Uterus (tissue), 4 donors: ENCODE measurements at regions of chr10 and their contacts with region 1.

Region 1: DNA sequence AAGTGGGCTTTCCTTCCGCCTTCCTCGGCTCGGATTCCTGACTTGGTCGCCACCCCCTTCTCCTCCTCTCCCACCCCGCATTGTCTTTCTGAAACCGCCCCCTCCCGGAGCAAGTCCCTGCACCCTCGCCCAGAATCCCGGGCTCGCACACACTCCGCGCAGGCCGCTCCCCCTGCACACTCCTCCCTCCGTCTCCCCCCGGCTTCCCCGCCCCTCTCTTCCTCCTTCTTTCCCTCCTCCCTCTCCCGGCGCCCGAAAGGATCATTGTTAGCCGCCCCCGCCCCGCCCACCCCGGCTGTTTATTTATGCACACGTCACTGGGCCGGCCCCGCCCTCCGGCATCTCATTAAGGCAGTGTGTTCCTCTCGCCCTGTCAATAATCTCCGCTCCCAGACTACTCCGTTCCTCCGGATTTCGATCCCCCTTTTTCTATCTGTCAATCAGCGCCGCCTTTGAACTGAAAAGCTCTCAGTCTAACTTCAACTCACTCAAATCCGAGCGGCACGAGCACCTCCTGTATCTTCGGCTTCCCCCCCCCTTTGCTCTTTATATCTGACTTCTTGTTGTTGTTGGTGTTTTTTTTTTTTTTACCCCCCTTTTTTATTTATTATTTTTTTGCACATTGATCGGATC is at the start of gene TCF7L2:
- DNase-seq: peak; percentile 94 to 98
- H3K4me3 ChIP-seq: peak within 1 kb of the TSS; percentile 80 to 90
- H3K27ac ChIP-seq: peak within 1 kb of the TSS; percentile 93 to 97
- H3K4me1 ChIP-seq: no peaks in the 10 kb centered on the region
- H3K27me3 ChIP-seq: no peaks in the 10 kb centered on the region
- CTCF ChIP-seq: no peak
- POLR2A ChIP-seq: peak; percentile 62 to 82
- total RNA-seq, gene TCF7L2: 12.7 to 59.9 (median 16.1) TPM

Region 2: GRCh38 chr10:112938808-112939482 is 11.0 kb before region 1 on chr10:
- intact Hi-C with region 1: no loop called
- DNase-seq: no peak
- H3K4me3 ChIP-seq: no peak overlapping the region
- H3K27ac ChIP-seq: no peak overlapping the region
- H3K4me1 ChIP-seq: no peaks in the 10 kb centered on the region
- H3K27me3 ChIP-seq: no peaks in the 10 kb centered on the region
- CTCF ChIP-seq: no peak
- POLR2A ChIP-seq: no peak

Region 3: GRCh38 chr10:113052076-113052830 is 102.3 kb after region 1 on chr10:
- intact Hi-C with region 1: loop called (anchors 10 kb)
- DNase-seq: no peak
- H3K4me3 ChIP-seq: no peak overlapping the region
- H3K27ac ChIP-seq: no peak overlapping the region
- H3K4me1 ChIP-seq: peaks cover 6% of the 10 kb centered on the region in 2 donors
- H3K27me3 ChIP-seq: no peaks in the 10 kb centered on the region
- CTCF ChIP-seq: peak in 2 of 4 experiments; percentile 4 to 12
- POLR2A ChIP-seq: no peak

Region 4: DNA sequence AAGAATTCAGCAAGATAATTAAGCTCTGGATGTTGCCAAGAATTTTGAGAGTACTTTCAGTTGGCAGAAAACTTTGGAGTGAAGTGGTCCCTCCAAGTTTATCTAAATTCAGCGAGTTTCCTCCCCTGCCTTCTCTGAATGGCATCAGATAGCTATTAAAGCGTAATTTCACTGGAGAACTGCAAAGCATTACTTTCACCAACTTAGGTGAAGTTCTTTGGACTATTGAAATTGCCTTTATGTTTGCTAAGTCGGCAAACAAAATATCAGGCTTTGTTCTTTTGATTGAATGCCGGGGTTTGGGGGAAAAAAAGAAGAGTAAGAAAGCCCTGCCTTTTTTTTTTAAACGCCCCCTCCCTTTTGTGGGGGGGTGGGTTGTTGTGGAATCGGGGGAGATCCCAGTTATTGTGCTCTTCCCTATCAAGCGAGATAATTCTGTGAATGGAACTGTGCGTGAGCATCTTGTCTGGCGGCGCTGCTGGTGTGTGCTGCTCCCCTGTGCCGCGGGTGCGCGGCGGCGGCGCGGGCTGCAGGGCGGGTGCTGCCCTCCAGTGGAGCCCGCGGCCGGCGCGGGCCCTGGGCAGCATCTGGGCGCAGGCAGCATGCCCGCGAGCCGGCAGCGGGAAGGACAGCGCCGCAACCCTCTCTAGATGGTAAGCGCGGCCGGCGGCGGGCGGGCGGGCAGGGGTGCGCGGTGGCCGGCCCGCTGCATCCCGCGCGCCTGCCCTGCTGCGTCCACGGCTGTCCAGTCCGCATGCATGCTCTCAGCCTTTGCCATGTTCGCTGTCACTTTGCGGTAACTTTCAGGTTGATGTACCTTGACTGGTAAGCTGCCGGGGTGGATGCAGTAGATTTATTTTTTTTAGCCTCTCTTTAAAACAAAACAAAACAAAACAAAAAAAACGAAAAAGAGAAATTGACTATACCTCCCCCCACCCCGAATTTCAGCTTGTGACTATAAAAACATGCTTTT is 176.5 kb after region 1 on chr10:
- intact Hi-C with region 1: loop called (anchors 10 kb)
- DNase-seq: peak; percentile 61 to 65
- H3K4me3 ChIP-seq: peak overlapping the region; percentile 30 to 40
- H3K27ac ChIP-seq: peak overlapping the region; percentile 54 to 77
- H3K4me1 ChIP-seq: no peaks in the 10 kb centered on the region
- H3K27me3 ChIP-seq: no peaks in the 10 kb centered on the region
- CTCF ChIP-seq: peak; percentile 44 to 92 (median 90)
- POLR2A ChIP-seq: no peak